ENCODE measurements at regions of chr14 and their contacts with region 1.

Region 1: GRCh38 chr14:51860164-51860824 is at the start of gene GNG2:
- DNase-seq: peak; percentile 91
- H3K4me3 Mint-ChIP-seq: peak within 1 kb of the TSS; percentile 96
- H3K27ac Mint-ChIP-seq: peak within 1 kb of the TSS; percentile 94
- H3K4me1 Mint-ChIP-seq: peaks cover 51% of the 10 kb centered on the region
- H3K27me3 Mint-ChIP-seq: no peaks in the 10 kb centered on the region
- total RNA-seq, gene GNG2: 176 to 181 TPM

Region 2: GRCh38 chr14:51462117-51462516 is 398.2 kb before region 1 on chr14:
- CTCF ChIA-PET with region 1: no interaction called
- intact Hi-C with region 1: no loop called
- DNase-seq: no peak
- H3K4me3 Mint-ChIP-seq: no peak overlapping the region
- H3K27ac Mint-ChIP-seq: no peak overlapping the region
- H3K4me1 Mint-ChIP-seq: no peaks in the 10 kb centered on the region
- H3K27me3 Mint-ChIP-seq: no peaks in the 10 kb centered on the region

Region 3: DNA sequence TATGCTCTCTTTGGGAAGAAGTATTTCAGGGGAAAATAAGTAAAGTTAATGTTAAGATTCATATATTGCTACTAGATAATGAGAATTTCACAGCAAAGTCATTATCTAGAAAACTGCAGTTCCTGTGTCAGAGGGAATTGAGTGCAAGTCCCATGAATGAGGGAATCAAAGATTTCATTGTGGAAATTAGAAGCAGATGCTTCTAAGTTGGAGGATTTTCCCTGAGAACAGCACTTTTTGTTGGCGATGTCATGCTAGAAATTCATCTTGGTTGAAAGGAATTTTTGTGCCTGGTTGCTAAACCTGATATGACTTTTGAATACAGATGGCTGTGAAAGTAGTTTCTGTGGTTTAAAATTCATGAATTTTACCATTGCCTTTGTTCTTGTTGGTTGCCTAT is 183.0 kb before region 1 on chr14:
- CTCF ChIA-PET with region 1: no interaction called
- intact Hi-C with region 1: loop called (anchors 5 kb)
- DNase-seq: no peak
- H3K4me3 Mint-ChIP-seq: no peak overlapping the region
- H3K27ac Mint-ChIP-seq: no peak overlapping the region
- H3K4me1 Mint-ChIP-seq: peaks cover 21% of the 10 kb centered on the region
- H3K27me3 Mint-ChIP-seq: peaks cover 8% of the 10 kb centered on the region

Region 4: DNA sequence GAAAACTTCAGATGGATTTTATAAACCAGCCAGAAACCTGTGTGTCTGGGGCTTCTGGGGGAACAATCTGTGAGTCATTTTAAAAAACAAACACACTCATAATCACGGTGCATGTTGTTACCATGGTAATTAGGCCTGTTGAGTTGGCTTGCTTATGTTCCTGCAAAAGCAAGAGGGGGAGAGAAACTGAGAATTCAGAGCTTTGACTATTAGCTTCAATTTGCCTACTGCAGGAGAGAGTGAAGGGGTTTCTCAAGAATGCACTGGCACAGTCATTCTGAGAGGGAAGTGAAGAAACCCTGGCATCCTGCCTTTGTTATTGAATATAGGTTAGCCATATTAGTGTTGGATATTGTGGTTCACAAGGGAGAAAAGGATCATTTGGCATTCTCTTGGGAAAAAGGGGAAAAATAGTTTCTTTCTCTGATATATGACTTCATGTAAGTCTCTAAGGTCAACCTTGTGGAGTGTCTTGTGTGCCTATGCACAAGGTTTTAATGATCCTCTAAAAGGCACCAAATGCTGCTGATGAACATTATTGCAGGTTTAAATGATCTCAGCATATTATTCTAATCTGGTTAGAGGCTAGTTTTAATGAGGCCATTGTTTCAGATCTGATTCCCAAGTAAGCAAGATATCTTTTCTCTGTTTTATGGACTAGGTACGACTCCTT is 13.1 kb after region 1 on chr14:
- CTCF ChIA-PET with region 1: interaction called, 3 read pairs
- intact Hi-C with region 1: loop called (anchors 1 kb)
- DNase-seq: peak; percentile 79
- H3K4me3 Mint-ChIP-seq: peak overlapping the region; percentile 34
- H3K27ac Mint-ChIP-seq: peak overlapping the region; percentile 84
- H3K4me1 Mint-ChIP-seq: peaks cover 66% of the 10 kb centered on the region
- H3K27me3 Mint-ChIP-seq: no peaks in the 10 kb centered on the region

Region 5: GRCh38 chr14:51929906-51930682 is 69.8 kb after region 1 on chr14:
- CTCF ChIA-PET with region 1: interaction called, 3 read pairs
- intact Hi-C with region 1: loop called (anchors 2 kb)
- DNase-seq: no peak
- H3K4me3 Mint-ChIP-seq: no peak overlapping the region
- H3K27ac Mint-ChIP-seq: peak overlapping the region; percentile 20
- H3K4me1 Mint-ChIP-seq: peaks cover 61% of the 10 kb centered on the region
- H3K27me3 Mint-ChIP-seq: no peaks in the 10 kb centered on the region